RWPE1 (cell line): ENCODE measurements at regions of chr7 and their contacts with region 1.

Region 1: DNA sequence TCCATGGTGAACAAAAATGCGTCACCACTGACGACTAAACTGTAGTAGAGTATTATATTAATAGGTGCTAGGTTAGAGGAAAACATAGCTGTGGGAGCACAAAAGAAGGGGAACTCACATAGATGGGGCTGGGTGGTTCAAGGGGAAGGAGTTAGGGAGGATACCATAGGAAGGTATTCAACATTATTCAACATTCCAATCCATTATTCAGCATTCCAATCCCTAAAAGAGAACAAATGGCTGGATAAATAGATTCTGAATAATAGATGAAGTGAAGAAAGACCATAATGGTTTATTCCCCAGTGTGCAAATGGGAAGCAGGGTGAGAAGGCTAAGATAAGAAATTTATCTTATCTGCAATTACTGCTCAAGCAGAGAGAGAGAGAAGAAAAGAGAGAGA is 61.4 kb downstream of the AASS start:
- DNase-seq: no peak
- H3K27ac ChIP-seq: no peak overlapping the region
- CTCF ChIP-seq: no peak

Region 2: DNA sequence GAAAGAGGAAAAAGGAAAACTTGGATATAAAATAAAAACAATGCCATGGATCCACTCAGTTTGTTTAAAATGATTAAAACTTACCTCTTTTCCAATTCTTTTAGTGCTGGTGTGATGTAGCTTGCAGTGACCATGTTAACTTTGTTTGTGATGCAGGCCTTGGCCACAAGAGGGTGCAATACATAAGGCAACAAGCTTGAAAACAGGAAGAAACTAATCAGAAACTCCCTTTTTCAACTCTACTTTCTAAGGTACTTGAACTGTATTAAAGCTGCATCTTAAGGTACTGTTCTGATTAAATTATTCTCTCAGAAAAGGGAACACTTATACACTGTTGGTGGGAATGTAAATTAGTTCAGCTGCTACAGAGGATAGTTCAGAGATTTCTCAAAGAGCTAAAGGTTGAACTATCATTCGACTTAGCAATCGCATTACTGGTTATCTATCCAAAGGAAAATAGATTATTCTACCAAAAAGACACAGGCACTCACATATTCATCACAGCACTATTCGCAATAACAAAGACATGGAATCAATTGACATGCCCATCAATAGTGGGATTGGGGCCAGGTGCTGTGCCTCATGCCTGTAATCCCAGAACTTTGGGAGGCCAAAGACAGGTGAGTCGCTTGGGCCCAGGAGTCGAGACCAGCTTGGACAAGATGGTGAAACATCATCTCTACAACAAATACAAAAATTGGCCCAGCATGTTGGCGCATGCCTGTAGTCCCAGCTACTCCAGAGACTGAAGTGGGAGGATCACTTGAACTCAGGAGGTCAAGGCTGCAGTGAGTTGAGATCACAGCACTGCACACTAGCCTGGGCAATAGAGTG is 10.5 kb after region 1 on chr7:
- CTCF ChIA-PET with region 1: interaction called, 11 read pairs
- POLR2A ChIA-PET with region 1: no interaction called
- DNase-seq: peak; percentile 36
- H3K27ac ChIP-seq: no peak overlapping the region
- CTCF ChIP-seq: peak; percentile 97